ENCODE measurements at regions of chr3 and their contacts with region 1.

Region 1: DNA sequence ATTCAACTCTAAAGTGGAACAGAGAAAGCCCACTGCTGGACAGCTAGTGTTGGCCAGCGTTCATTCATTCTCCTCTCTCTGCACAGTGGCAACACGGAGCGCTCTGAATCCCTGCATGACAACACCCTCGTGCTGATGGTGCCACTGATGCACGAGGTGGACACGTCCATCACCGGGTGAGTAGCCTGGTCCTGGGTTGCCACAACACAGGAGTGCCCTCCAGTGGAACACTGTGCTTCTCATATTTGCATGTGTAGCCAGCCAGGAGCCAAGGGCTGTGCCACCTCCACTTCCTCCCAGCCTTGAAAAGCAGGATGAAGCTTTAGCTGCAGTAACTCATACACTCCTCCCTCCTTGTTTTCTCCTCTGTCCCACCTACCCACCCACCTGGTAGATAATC is 120.0 kb upstream of the CTDSPL start:
- DNase-seq: peak; percentile 71
- ATAC-seq: peak; percentile 64

Region 2: DNA sequence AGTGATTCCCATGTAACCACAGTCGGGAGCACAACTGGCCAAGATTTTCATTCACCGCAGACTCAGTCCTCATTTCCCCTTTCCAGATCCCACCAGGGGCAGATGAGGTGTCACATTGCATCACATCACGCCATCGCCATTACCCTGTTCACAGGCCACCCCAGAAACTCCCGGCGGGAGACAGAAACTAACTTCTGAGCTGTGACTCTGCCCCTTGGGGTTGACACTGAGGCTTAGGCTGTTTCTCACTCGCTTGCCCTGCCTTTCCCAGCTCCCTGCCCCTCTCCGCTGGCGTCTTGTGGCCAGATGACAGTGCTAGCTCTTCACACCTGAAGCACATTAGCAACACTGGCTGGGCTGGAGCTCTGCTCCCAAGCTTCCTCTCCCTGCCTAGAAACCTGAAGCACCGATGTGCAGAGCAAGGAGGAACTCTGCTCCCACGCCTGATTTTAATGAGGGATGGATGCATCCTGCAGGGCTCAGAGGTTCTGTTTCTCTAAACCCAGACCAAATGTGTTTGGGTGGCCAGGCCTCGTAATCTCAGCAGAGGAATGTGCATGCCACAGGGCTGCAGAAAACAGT is 31.2 kb after region 1 on chr3:
- intact Hi-C with region 1: loop called (anchors 2 kb)
- DNase-seq: no peak
- ATAC-seq: peak; percentile 11

Measured in Right ventricle myocardium inferior (tissue), 1 donor.